T-cell (primary cell): ENCODE measurements at regions of chr7 and their contacts with region 1.

Region 1: DNA sequence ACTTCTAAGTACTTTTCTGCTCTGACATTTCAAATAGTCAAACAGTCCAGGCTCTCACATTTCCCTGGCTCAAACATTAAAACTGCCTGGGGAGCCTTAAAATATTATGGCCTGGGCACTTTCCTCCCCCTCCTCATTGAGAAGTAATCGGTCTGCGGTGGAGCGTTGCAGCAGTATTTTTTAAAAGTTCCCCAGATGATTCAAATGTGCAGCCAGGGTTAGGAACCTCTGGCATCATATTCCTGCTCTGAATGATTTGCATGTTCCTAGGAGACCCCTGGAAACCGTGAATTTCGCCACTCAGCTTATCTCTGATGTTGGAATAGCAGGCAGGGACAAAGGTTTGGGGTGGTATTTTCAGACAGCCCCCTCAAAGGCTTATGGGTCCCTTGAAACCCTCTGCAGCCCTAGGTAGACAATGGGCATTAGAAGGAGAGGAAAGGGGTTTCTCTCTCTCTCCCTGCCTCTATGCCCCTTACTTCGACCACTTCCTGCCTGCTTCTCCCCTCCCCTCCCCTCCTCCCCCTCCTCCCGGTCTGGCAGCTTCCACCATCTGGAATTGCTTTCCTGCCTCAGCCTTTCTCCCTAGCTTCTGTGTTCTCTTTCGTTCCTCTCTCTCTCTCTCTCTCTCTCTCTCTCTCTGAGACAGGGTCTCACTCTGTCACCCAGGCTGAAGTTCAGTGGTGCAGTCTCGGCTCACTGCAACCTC is 622.2 kb downstream of the GALNT17 start:
- DNase-seq: no peak
- ATAC-seq: no peak
- H3K4me3 ChIP-seq: no peak overlapping the region
- H3K4me3 Mint-ChIP-seq: no peak overlapping the region
- H3K27ac ChIP-seq: no peak overlapping the region
- H3K27ac Mint-ChIP-seq: no peak overlapping the region
- H3K4me1 ChIP-seq: peaks cover 0 to 4% of the 10 kb centered on the region in 2 experiments
- H3K4me1 Mint-ChIP-seq: peaks cover 0 to 1% (median 0%) of the 10 kb centered on the region in 3 donors
- H3K27me3 ChIP-seq: peaks cover 0 to 22% of the 10 kb centered on the region in 2 experiments
- H3K27me3 Mint-ChIP-seq: peaks cover 16 to 19% of the 10 kb centered on the region in 2 donors

Region 2: GRCh38 chr7:70856866-70857630 is 897.1 kb before region 1 on chr7:
- CTCF ChIA-PET with region 1: no interaction called
- POLR2A ChIA-PET with region 1: no interaction called
- DNase-seq: peak in 22 of 35 experiments; percentile 3 to 59 (median 14)
- ATAC-seq: no peak
- H3K4me3 ChIP-seq: no peak overlapping the region
- H3K4me3 Mint-ChIP-seq: no peak overlapping the region
- H3K27ac ChIP-seq: no peak overlapping the region
- H3K27ac Mint-ChIP-seq: no peak overlapping the region
- H3K4me1 ChIP-seq: no peaks in the 10 kb centered on the region
- H3K4me1 Mint-ChIP-seq: no peaks in the 10 kb centered on the region
- H3K27me3 ChIP-seq: peaks cover 0 to 8% of the 10 kb centered on the region in 2 experiments
- H3K27me3 Mint-ChIP-seq: no peaks in the 10 kb centered on the region

Region 3: GRCh38 chr7:71716690-71717089 is 37.4 kb before region 1 on chr7:
- CTCF ChIA-PET with region 1: no interaction called
- POLR2A ChIA-PET with region 1: no interaction called
- DNase-seq: no peak
- ATAC-seq: no peak
- H3K4me3 ChIP-seq: no peak overlapping the region
- H3K4me3 Mint-ChIP-seq: no peak overlapping the region
- H3K27ac ChIP-seq: no peak overlapping the region
- H3K27ac Mint-ChIP-seq: no peak overlapping the region
- H3K4me1 ChIP-seq: no peaks in the 10 kb centered on the region
- H3K4me1 Mint-ChIP-seq: no peaks in the 10 kb centered on the region
- H3K27me3 ChIP-seq: peaks cover 0 to 7% of the 10 kb centered on the region in 2 experiments
- H3K27me3 Mint-ChIP-seq: peaks cover 0 to 3% of the 10 kb centered on the region in 2 donors

Region 4: DNA sequence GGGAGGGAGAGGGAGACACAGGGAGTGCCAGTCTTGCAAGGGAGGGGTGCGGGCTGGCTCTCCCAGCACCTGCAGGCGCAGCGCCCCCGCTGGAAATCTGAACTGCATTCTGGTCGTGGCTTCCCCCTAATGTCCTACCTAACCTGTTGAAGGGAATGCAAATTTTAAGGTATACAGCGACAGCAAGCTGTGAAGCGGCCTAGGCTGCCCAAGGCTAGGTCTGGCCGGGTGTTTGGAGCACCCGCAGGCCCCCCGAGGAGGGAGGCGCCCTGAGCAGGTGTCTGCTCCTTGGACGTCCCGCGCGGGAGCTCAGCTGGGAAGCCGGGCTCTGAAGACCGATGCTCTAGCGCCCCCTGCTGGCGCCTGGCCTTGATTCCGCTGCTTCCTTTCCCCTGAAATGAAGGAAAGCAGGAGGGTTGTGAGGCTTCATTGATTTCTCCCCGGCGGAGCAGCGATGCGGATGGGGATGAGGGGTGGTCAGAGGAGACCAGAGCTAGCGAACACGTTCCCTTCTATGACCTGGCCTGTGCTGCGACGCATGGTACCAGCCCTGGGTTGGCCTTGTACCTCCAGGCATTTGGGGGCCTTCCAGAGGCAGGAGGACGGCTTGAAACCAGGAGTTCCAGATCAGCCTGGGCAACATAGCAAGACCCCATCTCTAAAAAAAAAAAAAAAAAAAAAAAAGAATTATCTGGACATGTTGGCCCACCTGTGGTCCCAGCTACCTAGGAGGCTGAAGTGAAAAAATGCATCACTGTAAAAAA is 20.8 kb before region 1 on chr7:
- CTCF ChIA-PET with region 1: interaction called in 1 of 2 experiments, 11 read pairs
- POLR2A ChIA-PET with region 1: no interaction called
- DNase-seq: peak in 32 of 35 experiments; percentile 6 to 70 (median 28)
- ATAC-seq: no peak
- H3K4me3 ChIP-seq: no peak overlapping the region
- H3K4me3 Mint-ChIP-seq: peak overlapping the region in 1 of 3 donors; percentile 4
- H3K27ac ChIP-seq: no peak overlapping the region
- H3K27ac Mint-ChIP-seq: no peak overlapping the region
- H3K4me1 ChIP-seq: peaks cover 0 to 4% of the 10 kb centered on the region in 2 experiments
- H3K4me1 Mint-ChIP-seq: peaks cover 0 to 6% (median 0%) of the 10 kb centered on the region in 3 donors
- H3K27me3 ChIP-seq: peaks cover 0 to 21% of the 10 kb centered on the region in 2 experiments
- H3K27me3 Mint-ChIP-seq: peaks cover 7% of the 10 kb centered on the region in 2 donors